B cell (primary cell): ENCODE measurements at regions of chr19 and their contacts with region 1.

Region 1: GRCh38 chr19:38335949-38336637 is 463 bp downstream of the CATSPERG start:
- DNase-seq: peak; percentile 96
- ATAC-seq: peak; percentile 64
- H3K4me3 ChIP-seq: peak overlapping the region; percentile 52 to 85 (median 80)
- H3K4me3 Mint-ChIP-seq: peak overlapping the region; percentile 97
- H3K27ac ChIP-seq: peak overlapping the region; percentile 89 to 95
- H3K27ac Mint-ChIP-seq: peak overlapping the region; percentile 97
- H3K4me1 ChIP-seq: peaks cover 5 to 11% of the 10 kb centered on the region in 2 donors
- H3K4me1 Mint-ChIP-seq: peaks cover 13% of the 10 kb centered on the region
- H3K27me3 ChIP-seq: no peaks in the 10 kb centered on the region
- H3K27me3 Mint-ChIP-seq: no peaks in the 10 kb centered on the region
- CTCF ChIP-seq: no peak

Region 2: DNA sequence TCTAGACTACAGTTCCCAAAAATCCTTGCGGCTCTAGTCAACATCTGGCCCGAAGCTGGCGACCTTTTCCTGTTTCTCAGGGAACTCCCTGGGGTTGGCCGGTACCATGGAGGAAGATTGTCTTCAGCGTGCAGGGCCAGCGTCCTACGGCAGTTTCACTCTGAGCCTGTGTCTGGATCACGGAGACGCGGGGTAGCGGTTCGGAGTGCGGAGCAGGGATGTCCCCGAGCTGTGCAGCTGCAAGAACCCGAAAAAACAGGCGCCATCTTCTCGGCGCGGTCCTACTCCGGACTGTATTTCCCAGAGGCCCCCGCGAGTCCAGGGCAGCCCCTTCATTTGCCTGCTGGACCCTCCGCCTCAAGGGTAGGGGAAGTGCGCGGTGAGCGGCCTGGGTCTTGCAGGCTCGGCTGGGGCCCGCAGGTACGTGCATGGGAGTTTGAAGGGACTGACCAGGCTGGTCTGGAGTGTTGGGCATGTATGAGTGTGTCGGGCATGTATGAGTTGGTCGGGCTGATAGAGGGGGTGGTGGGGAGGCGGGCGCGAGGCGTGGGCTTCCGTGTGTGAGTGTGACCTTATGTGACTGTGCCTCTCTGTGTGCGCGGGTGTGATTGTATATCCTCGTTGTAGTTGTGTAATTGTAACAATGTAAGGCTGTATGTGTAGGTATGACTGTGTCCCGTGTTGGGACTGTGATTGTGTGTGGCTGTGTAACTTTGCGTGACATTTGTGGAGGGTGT is 1118.1 kb before region 1 on chr19 and contains the start of gene ZNF383:
- CTCF ChIA-PET with region 1: no interaction called
- POLR2A ChIA-PET with region 1: no interaction called
- intact Hi-C with region 1: loop called (anchors 10 kb)
- DNase-seq: peak; percentile 92
- ATAC-seq: peak; percentile 90
- H3K4me3 ChIP-seq: peak within 1 kb of the TSS; percentile 78 to 96 (median 88)
- H3K4me3 Mint-ChIP-seq: peak within 1 kb of the TSS; percentile 97
- H3K27ac ChIP-seq: peak within 1 kb of the TSS; percentile 77 to 86
- H3K27ac Mint-ChIP-seq: peak within 1 kb of the TSS; percentile 100
- H3K4me1 ChIP-seq: peaks cover 10 to 12% of the 10 kb centered on the region in 2 donors
- H3K4me1 Mint-ChIP-seq: peaks cover 24% of the 10 kb centered on the region
- H3K27me3 ChIP-seq: no peaks in the 10 kb centered on the region
- H3K27me3 Mint-ChIP-seq: no peaks in the 10 kb centered on the region
- CTCF ChIP-seq: no peak
- total RNA-seq, gene ZNF383: 37.2 and 42.2 TPM in 2 replicates

Region 3: DNA sequence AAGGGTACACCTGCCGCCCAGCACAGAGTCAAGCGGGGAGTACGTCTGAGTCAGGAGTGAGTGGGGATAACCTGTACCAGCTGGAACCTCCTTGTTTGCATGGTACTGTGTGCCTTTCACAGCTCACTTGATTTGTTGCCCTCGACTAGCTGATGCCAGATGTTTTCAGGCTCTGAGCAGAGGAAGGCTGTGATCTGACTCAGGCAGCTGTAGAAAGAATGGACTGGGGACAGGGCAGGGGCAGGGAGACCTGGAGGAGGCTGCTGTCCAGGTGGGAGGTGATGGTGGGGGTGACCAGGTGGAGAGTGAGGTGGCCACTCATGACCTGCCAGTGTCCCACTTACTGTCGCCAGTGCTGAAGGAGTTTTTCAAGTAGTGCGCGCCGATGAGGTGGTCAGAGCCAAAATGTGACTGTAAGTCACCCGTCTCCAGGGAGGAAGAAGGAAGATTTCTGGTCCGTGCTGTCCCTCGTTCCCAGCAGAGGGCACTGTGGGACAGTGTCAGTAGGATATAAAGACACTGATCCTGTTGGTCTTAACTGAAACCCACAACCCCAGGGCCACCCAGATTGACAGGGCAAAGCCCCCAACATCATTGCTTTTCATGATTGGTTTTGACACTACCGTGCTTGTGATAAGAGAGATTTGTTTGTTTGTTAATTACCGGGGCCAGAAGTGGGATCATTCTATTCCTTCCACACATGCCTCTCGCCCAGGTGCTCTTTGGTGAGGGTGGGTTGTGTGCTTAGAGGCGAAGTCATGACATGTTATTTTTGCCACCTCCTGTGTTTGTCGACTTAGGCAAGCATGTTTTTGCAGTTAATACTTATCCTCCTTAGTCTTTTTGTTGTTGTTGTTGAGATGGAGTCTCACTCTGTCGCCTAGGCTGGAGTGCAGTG is 240.4 kb before region 1 on chr19:
- CTCF ChIA-PET with region 1: no interaction called
- POLR2A ChIA-PET with region 1: no interaction called
- intact Hi-C with region 1: loop called (anchors 1 kb)
- DNase-seq: peak; percentile 78
- ATAC-seq: peak; percentile 81
- H3K4me3 ChIP-seq: no peak overlapping the region
- H3K4me3 Mint-ChIP-seq: peak overlapping the region; percentile 11
- H3K27ac ChIP-seq: peak overlapping the region; percentile 18 to 69
- H3K27ac Mint-ChIP-seq: peak overlapping the region; percentile 90
- H3K4me1 ChIP-seq: peaks cover 7 to 12% of the 10 kb centered on the region in 2 donors
- H3K4me1 Mint-ChIP-seq: peaks cover 21% of the 10 kb centered on the region
- H3K27me3 ChIP-seq: no peaks in the 10 kb centered on the region
- H3K27me3 Mint-ChIP-seq: no peaks in the 10 kb centered on the region
- CTCF ChIP-seq: peak; percentile 73

Region 4: DNA sequence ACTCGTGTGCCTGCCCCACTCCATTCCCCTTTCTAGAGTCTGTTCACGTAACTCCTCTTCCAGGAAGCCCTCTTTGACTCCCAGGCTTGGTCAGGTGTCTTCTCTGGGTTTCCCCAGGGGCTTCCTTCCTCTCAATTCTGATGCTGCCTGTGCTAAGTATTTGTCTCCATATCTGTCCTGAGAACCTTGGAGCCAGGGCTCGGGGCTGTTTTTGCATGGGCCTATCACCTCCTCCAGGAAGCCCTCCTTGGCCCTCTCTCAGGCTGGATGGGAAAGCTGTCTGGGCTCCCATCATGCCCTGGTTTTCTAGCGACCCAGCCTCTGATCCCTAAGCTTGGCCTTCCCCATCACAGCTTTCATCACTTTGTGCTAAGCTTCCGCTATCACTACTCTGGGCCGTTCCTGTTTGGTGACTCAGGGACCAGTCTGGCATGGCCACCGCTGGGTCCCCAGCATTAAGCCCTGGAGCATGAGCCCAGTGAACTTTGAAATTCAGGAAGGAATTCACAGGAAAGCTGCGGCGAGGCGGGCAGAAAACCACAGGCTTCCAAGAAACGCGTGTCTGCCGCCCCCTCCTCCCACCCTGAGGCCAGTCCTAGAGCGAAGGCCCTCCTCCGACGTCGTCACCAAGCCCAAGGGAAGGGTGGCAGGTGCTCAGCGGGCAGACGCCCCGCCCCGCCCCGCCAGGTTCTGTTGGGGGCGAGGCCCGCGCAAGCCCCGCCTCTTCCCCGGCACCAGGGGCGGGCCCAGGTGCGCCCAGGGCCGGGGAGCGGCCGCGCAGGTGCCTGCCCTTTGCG is 72.2 kb before region 1 on chr19:
- CTCF ChIA-PET with region 1: interaction called, 11 read pairs
- POLR2A ChIA-PET with region 1: interaction called, 4 read pairs
- intact Hi-C with region 1: loop called (anchors 1 kb)
- DNase-seq: peak; percentile 95
- ATAC-seq: peak; percentile 91
- H3K4me3 ChIP-seq: peak overlapping the region in 4 of 5 experiments; percentile 67 to 87 (median 71)
- H3K4me3 Mint-ChIP-seq: peak overlapping the region; percentile 98
- H3K27ac ChIP-seq: peak overlapping the region; percentile 83 to 98
- H3K27ac Mint-ChIP-seq: peak overlapping the region; percentile 99
- H3K4me1 ChIP-seq: peaks cover 20 to 26% of the 10 kb centered on the region in 2 donors
- H3K4me1 Mint-ChIP-seq: peaks cover 39% of the 10 kb centered on the region
- H3K27me3 ChIP-seq: no peaks in the 10 kb centered on the region
- H3K27me3 Mint-ChIP-seq: no peaks in the 10 kb centered on the region
- CTCF ChIP-seq: no peak

Region 5: GRCh38 chr19:38374429-38375176 is 38.5 kb after region 1 on chr19 and contains the start of gene PSMD8:
- CTCF ChIA-PET with region 1: interaction called, 21 read pairs
- POLR2A ChIA-PET with region 1: interaction called, 14 read pairs
- intact Hi-C with region 1: loop called (anchors 1 kb)
- DNase-seq: peak; percentile 100
- ATAC-seq: peak; percentile 97
- H3K4me3 ChIP-seq: peak within 1 kb of the TSS; percentile 69 to 92 (median 80)
- H3K4me3 Mint-ChIP-seq: peak within 1 kb of the TSS; percentile 93
- H3K27ac ChIP-seq: peak within 1 kb of the TSS; percentile 88 to 90
- H3K27ac Mint-ChIP-seq: peak within 1 kb of the TSS; percentile 96
- H3K4me1 ChIP-seq: peaks cover 17 to 26% of the 10 kb centered on the region in 2 donors
- H3K4me1 Mint-ChIP-seq: peaks cover 26% of the 10 kb centered on the region
- H3K27me3 ChIP-seq: peaks cover 0 to 12% (median 0%) of the 10 kb centered on the region in 4 experiments
- H3K27me3 Mint-ChIP-seq: peaks cover 6% of the 10 kb centered on the region
- CTCF ChIP-seq: peak; percentile 18
- total RNA-seq, gene PSMD8: 77.1 and 88.1 TPM in 2 replicates

Region 6: GRCh38 chr19:38496603-38497487 is 160.8 kb after region 1 on chr19:
- CTCF ChIA-PET with region 1: no interaction called
- POLR2A ChIA-PET with region 1: no interaction called
- intact Hi-C with region 1: no loop called
- DNase-seq: no peak
- ATAC-seq: no peak
- H3K4me3 ChIP-seq: no peak overlapping the region
- H3K4me3 Mint-ChIP-seq: no peak overlapping the region
- H3K27ac ChIP-seq: no peak overlapping the region
- H3K27ac Mint-ChIP-seq: no peak overlapping the region
- H3K4me1 ChIP-seq: peaks cover 6 to 8% of the 10 kb centered on the region in 2 donors
- H3K4me1 Mint-ChIP-seq: peaks cover 12% of the 10 kb centered on the region
- H3K27me3 ChIP-seq: peaks cover 0 to 5% (median 0%) of the 10 kb centered on the region in 4 experiments
- H3K27me3 Mint-ChIP-seq: no peaks in the 10 kb centered on the region
- CTCF ChIP-seq: no peak